Activated CD4-positive, alpha-beta T cell treated with anti-CD3 and anti-CD28 coated beads for 36 hours (primary cell): ENCODE measurements at regions of chrX and their contacts with region 1.

Region 1: DNA sequence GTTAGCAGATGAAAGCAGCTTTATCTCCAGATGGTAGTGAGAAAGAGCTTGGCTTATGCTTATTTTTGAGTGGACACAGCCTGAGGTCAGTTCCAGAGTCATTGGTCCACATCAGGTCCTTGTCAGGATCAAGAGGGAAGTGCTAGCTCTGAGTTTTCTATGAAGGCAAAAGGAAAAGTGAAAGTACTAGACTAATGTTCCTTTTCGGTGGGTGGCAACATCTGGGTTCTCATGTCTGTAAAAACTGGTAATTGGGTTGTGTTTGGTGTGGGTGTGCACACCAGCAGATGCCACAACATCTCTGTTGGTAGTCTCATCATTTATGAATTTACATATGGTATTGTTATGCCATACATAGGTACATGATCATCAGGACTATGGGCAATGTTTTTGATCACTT is 210.5 kb downstream of the PWWP3B start:
- DNase-seq: no peak
- ATAC-seq: peak; percentile 33
- H3K4me3 Mint-ChIP-seq: no peak overlapping the region
- H3K27ac Mint-ChIP-seq: no peak overlapping the region
- H3K4me1 Mint-ChIP-seq: peaks cover 2% of the 10 kb centered on the region
- H3K27me3 Mint-ChIP-seq: no peaks in the 10 kb centered on the region

Region 2: DNA sequence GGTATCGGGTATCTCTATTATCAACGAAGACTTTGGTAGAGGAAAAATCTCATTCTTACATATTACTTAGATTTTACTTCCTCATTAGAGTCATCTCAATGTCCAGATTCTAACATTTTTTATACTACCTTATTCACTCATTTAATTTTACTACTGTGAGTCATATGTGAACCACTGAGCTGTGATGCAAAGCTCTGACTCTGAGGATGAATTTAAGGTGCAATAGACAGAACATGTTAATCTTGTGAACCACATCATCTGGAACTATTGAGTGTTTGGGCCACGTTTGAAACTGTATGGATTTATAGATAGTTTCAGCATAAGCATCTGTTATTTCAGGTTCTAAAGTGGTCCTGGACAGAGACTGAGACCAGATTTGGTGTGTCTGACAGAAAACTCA is 132.1 kb before region 1 on chrX:
- CTCF ChIA-PET with region 1: no interaction called
- POLR2A ChIA-PET with region 1: no interaction called
- intact Hi-C with region 1: no loop called
- DNase-seq: no peak
- ATAC-seq: no peak
- H3K4me3 Mint-ChIP-seq: no peak overlapping the region
- H3K27ac Mint-ChIP-seq: no peak overlapping the region
- H3K4me1 Mint-ChIP-seq: no peaks in the 10 kb centered on the region
- H3K27me3 Mint-ChIP-seq: no peaks in the 10 kb centered on the region

Region 3: DNA sequence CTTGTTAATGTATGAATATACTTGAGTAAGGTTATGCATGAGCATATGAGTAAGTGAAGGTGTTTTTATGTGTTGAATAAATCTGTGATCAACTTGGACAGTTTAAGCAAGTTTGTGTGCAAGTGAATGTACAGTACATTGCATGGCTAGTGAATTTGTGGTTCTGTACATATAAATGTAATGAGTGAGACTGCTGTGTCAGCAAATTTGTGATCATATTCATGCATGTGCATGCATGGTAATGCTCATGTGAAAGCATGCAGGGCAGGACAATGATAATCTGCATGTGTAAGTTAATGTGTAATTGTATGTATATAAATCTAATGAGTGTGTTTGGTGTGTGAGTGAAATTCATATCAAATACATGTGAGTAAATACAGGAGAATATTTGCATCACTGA is 22.0 kb before region 1 on chrX:
- CTCF ChIA-PET with region 1: no interaction called
- POLR2A ChIA-PET with region 1: no interaction called
- intact Hi-C with region 1: loop called in 1 of 2 experiments (anchors 1 kb)
- DNase-seq: no peak
- ATAC-seq: no peak
- H3K4me3 Mint-ChIP-seq: no peak overlapping the region
- H3K27ac Mint-ChIP-seq: no peak overlapping the region
- H3K4me1 Mint-ChIP-seq: no peaks in the 10 kb centered on the region
- H3K27me3 Mint-ChIP-seq: no peaks in the 10 kb centered on the region